ENCODE measurements at regions of chr6 and their contacts with region 1.

Region 1: GRCh38 chr6:155523821-155524651 is 68.4 kb upstream of the NOX3 start:
- DNase-seq: peak; percentile 43
- H3K4me3 Mint-ChIP-seq: no peak overlapping the region
- H3K27ac Mint-ChIP-seq: peak overlapping the region; percentile 84
- H3K4me1 Mint-ChIP-seq: peaks cover 47% of the 10 kb centered on the region
- H3K27me3 Mint-ChIP-seq: no peaks in the 10 kb centered on the region

Region 2: GRCh38 chr6:155188707-155189496 is 335.1 kb before region 1 on chr6:
- CTCF ChIA-PET with region 1: no interaction called
- intact Hi-C with region 1: loop called (anchors 5 kb)
- DNase-seq: no peak
- H3K4me3 Mint-ChIP-seq: no peak overlapping the region
- H3K27ac Mint-ChIP-seq: no peak overlapping the region
- H3K4me1 Mint-ChIP-seq: peaks cover 50% of the 10 kb centered on the region
- H3K27me3 Mint-ChIP-seq: no peaks in the 10 kb centered on the region

Region 3: DNA sequence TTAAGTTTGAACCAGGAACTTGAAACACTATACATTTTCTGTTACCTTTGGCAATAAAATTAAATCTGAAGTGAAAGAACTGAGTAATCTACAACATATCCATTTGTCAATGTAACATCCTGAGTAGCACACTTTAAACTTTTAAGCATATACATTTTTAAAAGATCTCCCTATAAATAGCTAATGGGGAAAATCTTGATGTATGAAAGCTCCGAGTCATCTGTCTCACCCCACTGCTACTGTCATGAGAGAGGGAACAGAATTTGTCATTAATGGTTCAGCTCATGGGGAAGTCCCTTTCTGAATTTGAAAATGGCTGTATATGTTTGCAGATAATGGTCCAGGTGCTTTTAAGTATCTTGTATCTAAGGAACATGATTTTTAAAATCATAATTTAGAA is 13.2 kb before region 1 on chr6:
- CTCF ChIA-PET with region 1: interaction called, 4 read pairs
- intact Hi-C with region 1: loop called (anchors 1 kb)
- DNase-seq: peak; percentile 40
- H3K4me3 Mint-ChIP-seq: no peak overlapping the region
- H3K27ac Mint-ChIP-seq: peak overlapping the region; percentile 73
- H3K4me1 Mint-ChIP-seq: peaks cover 23% of the 10 kb centered on the region
- H3K27me3 Mint-ChIP-seq: no peaks in the 10 kb centered on the region

Region 4: DNA sequence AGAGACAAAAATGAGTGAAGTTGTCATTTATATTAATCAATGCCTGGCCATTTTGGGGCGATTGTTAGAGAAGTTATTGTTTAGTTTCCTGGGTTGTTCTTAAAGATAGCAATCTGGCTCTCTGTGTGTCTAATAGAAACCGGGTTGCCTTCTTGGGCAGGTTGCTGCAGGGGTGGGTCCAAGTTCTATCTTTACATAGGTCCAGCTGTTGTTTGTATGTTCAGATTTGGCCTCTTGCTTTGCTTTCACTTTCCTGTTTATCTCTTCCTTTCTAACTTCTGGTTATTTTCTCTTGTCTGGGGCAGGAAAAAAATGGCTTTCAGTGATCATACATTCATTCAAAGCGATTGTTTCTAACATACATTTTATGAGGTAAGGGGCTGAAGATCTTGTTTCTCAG is 60.0 kb after region 1 on chr6:
- CTCF ChIA-PET with region 1: no interaction called
- intact Hi-C with region 1: no loop called
- DNase-seq: no peak
- H3K4me3 Mint-ChIP-seq: no peak overlapping the region
- H3K27ac Mint-ChIP-seq: no peak overlapping the region
- H3K4me1 Mint-ChIP-seq: no peaks in the 10 kb centered on the region
- H3K27me3 Mint-ChIP-seq: peaks cover 5% of the 10 kb centered on the region

Measured in activated naive CD4-positive, alpha-beta T cell treated with anti-CD3 and anti-CD28 coated beads for 36 hours (primary cell).